ENCODE measurements at regions of chr10 and their contacts with region 1.

Region 1: GRCh38 chr10:128005857-128006256 is 99.0 kb downstream of the PTPRE start:
- DNase-seq: no peak
- ATAC-seq: no peak
- H3K4me3 ChIP-seq: no peak overlapping the region
- H3K27ac ChIP-seq: no peak overlapping the region
- H3K4me1 ChIP-seq: no peaks in the 10 kb centered on the region
- H3K27me3 ChIP-seq: 0 out of 4 replicates have a peak, but pooled peaks cover 0 to 2% of the 10 kb centered on the region in 2 experiments
- CTCF ChIP-seq: no peak
- EP300 ChIP-seq: no peak
- POLR2A ChIP-seq: no peak
- RAD21 ChIP-seq: no peak

Region 2: GRCh38 chr10:127973791-127974311 is 32.0 kb before region 1 on chr10:
- CTCF ChIA-PET with region 1: interaction called, 4 read pairs
- POLR2A ChIA-PET with region 1: interaction called, 11 read pairs
- RAD21 ChIA-PET with region 1: no interaction called
- SMC1A ChIA-PET with region 1: no interaction called
- in situ Hi-C with region 1: no loop called
- intact Hi-C with region 1: no loop called
- DNase-seq: no peak
- ATAC-seq: no peak
- H3K4me3 ChIP-seq: no peak overlapping the region
- H3K27ac ChIP-seq: no peak overlapping the region
- H3K4me1 ChIP-seq: no peaks in the 10 kb centered on the region
- H3K27me3 ChIP-seq: peaks cover 0 to 2% of the 10 kb centered on the region in 2 experiments; a peak in 1 of 4 replicates
- CTCF ChIP-seq: no peak
- EP300 ChIP-seq: no peak
- POLR2A ChIP-seq: no peak
- RAD21 ChIP-seq: no peak